ENCODE measurements at regions of chr2 and their contacts with region 1.

Region 1: DNA sequence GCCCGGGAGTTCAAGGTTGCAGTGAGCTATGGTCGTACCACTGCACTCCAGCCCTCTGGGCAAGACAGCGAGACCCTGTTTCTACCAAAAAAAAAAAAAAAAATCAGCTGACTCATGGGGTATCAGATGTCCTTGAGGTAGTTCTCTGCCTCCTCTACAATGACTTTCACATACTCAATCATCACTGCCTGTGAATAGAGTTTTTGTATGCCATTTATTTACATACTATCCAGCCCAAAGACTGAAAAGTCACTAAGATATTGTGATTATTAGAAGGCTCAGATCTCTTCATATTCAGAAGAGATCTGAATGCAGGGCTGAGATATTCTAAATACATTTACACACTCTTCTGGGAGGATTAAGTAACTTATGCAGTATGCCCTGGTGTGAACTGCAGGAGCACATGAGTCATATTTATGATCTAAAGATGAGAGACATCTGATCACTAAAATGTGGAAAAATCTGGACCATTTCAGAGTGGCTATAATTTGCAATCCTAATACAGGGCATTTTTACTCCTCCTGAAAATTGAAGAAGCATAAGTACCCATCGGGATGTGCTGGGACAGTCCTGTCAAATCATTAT is 38.9 kb downstream of the KLF7 start:
- DNase-seq: no peak
- ATAC-seq: no peak
- H3K4me3 ChIP-seq: no peak overlapping the region
- H3K4me3 Mint-ChIP-seq: no peak overlapping the region
- H3K27ac ChIP-seq: no peak overlapping the region
- H3K27ac Mint-ChIP-seq: no peak overlapping the region
- H3K4me1 ChIP-seq: peaks cover 19 to 23% of the 10 kb centered on the region in 2 donors
- H3K4me1 Mint-ChIP-seq: peaks cover 49% of the 10 kb centered on the region
- H3K27me3 ChIP-seq: no peaks in the 10 kb centered on the region
- H3K27me3 Mint-ChIP-seq: no peaks in the 10 kb centered on the region
- CTCF ChIP-seq: no peak

Region 2: GRCh38 chr2:207115715-207116364 is 11.0 kb before region 1 on chr2:
- CTCF ChIA-PET with region 1: interaction called, 3 read pairs
- POLR2A ChIA-PET with region 1: no interaction called
- intact Hi-C with region 1: loop called (anchors 2 kb)
- DNase-seq: no peak
- ATAC-seq: no peak
- H3K4me3 ChIP-seq: no peak overlapping the region
- H3K4me3 Mint-ChIP-seq: no peak overlapping the region
- H3K27ac ChIP-seq: no peak overlapping the region
- H3K27ac Mint-ChIP-seq: no peak overlapping the region
- H3K4me1 ChIP-seq: peaks cover 7 to 8% of the 10 kb centered on the region in 2 donors
- H3K4me1 Mint-ChIP-seq: peaks cover 32% of the 10 kb centered on the region
- H3K27me3 ChIP-seq: no peaks in the 10 kb centered on the region
- H3K27me3 Mint-ChIP-seq: no peaks in the 10 kb centered on the region
- CTCF ChIP-seq: no peak

Region 3: GRCh38 chr2:207616185-207616584 is 489.4 kb after region 1 on chr2:
- CTCF ChIA-PET with region 1: no interaction called
- POLR2A ChIA-PET with region 1: interaction called, 11 read pairs
- intact Hi-C with region 1: no loop called
- DNase-seq: no peak
- ATAC-seq: no peak
- H3K4me3 ChIP-seq: no peak overlapping the region
- H3K4me3 Mint-ChIP-seq: no peak overlapping the region
- H3K27ac ChIP-seq: no peak overlapping the region
- H3K27ac Mint-ChIP-seq: no peak overlapping the region
- H3K4me1 ChIP-seq: peaks cover 23 to 25% of the 10 kb centered on the region in 2 donors
- H3K4me1 Mint-ChIP-seq: peaks cover 34% of the 10 kb centered on the region
- H3K27me3 ChIP-seq: no peaks in the 10 kb centered on the region
- H3K27me3 Mint-ChIP-seq: no peaks in the 10 kb centered on the region
- CTCF ChIP-seq: no peak

Measured in B cell (primary cell).